B cell (primary cell): ENCODE measurements at regions of chr19 and their contacts with region 1.

Region 1: DNA sequence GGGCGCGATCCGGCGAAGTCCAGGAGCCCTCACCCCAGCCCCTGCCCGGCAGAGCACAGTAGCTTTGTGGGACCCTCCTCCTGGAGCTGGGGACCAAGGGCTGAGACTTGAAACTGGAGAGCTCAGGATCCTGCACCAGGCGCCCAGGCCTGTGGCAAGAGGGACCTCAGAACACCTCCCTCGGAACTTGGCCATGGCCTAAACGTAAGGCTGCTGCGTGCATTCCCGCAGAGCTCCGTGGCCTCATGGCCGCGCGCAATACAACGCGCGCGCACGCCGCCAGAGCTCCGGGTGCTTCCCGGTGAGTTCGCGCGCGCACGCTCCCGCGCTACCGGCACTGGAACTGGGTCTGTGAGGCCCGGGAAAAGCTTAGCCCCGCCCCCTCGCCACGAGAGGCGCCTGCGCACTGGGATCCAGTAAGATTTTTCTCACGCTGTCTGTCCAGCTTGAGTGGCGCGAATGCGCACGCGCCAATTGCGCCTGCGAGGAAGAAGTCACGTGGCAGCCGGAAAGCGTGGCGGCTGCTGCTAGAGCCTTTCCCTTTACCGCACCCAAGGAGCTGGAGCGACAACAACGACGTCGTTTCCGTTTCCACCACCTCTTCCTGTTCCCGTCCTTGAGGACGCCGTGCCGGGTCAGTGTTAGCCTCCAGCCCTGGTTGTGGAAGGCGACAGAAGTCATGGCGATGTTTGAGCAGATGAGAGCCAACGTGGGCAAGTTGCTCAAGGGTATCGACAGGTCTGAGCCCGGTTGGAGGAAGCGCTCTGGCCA is at the start of gene EIF3K:
- DNase-seq: peak; percentile 99
- ATAC-seq: peak; percentile 40
- H3K4me3 ChIP-seq: peak within 1 kb of the TSS; percentile 54 to 95 (median 79)
- H3K4me3 Mint-ChIP-seq: peak within 1 kb of the TSS; percentile 100
- H3K27ac ChIP-seq: peak within 1 kb of the TSS; percentile 88 to 93
- H3K27ac Mint-ChIP-seq: peak within 1 kb of the TSS; percentile 98
- H3K4me1 ChIP-seq: peaks cover 33 to 50% of the 10 kb centered on the region in 2 donors
- H3K4me1 Mint-ChIP-seq: peaks cover 47% of the 10 kb centered on the region
- H3K27me3 ChIP-seq: no peaks in the 10 kb centered on the region
- H3K27me3 Mint-ChIP-seq: no peaks in the 10 kb centered on the region
- CTCF ChIP-seq: no peak
- total RNA-seq, gene EIF3K: 284 and 295 TPM in 2 replicates

Region 2: GRCh38 chr19:38335949-38336637 is 282.7 kb before region 1 on chr19:
- CTCF ChIA-PET with region 1: interaction called, 3 read pairs
- POLR2A ChIA-PET with region 1: no interaction called
- intact Hi-C with region 1: loop called (anchors 1 kb)
- DNase-seq: peak; percentile 96
- ATAC-seq: peak; percentile 64
- H3K4me3 ChIP-seq: peak overlapping the region; percentile 52 to 85 (median 80)
- H3K4me3 Mint-ChIP-seq: peak overlapping the region; percentile 97
- H3K27ac ChIP-seq: peak overlapping the region; percentile 89 to 95
- H3K27ac Mint-ChIP-seq: peak overlapping the region; percentile 97
- H3K4me1 ChIP-seq: peaks cover 5 to 11% of the 10 kb centered on the region in 2 donors
- H3K4me1 Mint-ChIP-seq: peaks cover 13% of the 10 kb centered on the region
- H3K27me3 ChIP-seq: no peaks in the 10 kb centered on the region
- H3K27me3 Mint-ChIP-seq: no peaks in the 10 kb centered on the region
- CTCF ChIP-seq: no peak

Region 3: DNA sequence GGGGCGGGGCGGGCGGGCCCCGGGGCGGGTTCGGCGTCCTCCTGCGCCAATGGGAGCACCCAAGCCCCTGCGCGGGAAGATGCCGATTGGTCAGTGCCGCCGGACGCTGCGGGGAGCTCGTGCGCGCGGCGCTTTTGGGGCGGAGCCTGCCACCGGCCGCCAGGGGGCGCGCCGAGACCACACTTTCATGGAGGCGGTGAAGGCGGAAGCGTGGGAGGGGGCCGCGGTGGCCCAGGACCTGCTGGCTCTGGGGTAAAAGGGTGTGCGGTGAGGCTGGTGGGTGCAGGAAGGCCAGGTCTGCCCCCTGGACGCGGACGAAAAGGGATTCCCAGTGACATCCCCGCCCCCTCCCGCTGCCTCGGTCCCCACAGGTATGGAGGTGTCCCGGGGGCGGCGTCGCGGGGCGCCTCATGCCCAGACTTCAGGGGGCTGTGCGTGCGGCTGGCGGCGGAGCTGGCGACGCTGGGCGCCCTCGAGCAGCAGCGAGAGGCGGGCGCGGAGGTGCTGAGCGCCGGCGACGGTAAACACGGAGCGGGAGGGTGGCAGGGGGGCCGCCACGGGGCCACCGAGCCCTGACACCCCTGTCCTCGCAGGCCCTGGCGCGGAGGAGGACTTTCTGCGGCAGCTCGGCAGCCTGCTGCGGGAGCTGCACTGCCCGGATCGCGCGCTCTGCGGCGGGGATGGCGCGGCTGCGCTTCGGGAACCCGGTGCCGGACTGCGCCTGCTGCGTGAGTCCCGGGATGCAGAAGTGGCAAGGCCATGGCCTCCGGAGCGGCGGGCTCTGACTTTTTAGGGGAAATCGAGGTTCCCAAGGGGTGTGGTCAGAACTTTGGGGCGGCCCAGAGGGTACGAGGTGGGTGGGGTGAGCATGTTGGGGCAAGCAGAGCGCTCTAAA is 215.6 kb before region 1 on chr19 and contains the start of gene FAM98C:
- CTCF ChIA-PET with region 1: interaction called, 21 read pairs
- POLR2A ChIA-PET with region 1: interaction called, 5 read pairs
- intact Hi-C with region 1: loop called (anchors 1 kb)
- DNase-seq: peak; percentile 99
- ATAC-seq: peak; percentile 97
- H3K4me3 ChIP-seq: peak within 1 kb of the TSS; percentile 41 to 85 (median 75)
- H3K4me3 Mint-ChIP-seq: peak within 1 kb of the TSS; percentile 94
- H3K27ac ChIP-seq: peak within 1 kb of the TSS; percentile 61 to 79
- H3K27ac Mint-ChIP-seq: peak within 1 kb of the TSS; percentile 94
- H3K4me1 ChIP-seq: peaks cover 5 to 14% of the 10 kb centered on the region in 2 donors
- H3K4me1 Mint-ChIP-seq: peaks cover 18% of the 10 kb centered on the region
- H3K27me3 ChIP-seq: peaks cover 0 to 20% (median 7%) of the 10 kb centered on the region in 4 experiments
- H3K27me3 Mint-ChIP-seq: peaks cover 18% of the 10 kb centered on the region
- CTCF ChIP-seq: peak; percentile 99
- total RNA-seq, gene FAM98C: 44.1 and 45.3 TPM in 2 replicates

Region 4: DNA sequence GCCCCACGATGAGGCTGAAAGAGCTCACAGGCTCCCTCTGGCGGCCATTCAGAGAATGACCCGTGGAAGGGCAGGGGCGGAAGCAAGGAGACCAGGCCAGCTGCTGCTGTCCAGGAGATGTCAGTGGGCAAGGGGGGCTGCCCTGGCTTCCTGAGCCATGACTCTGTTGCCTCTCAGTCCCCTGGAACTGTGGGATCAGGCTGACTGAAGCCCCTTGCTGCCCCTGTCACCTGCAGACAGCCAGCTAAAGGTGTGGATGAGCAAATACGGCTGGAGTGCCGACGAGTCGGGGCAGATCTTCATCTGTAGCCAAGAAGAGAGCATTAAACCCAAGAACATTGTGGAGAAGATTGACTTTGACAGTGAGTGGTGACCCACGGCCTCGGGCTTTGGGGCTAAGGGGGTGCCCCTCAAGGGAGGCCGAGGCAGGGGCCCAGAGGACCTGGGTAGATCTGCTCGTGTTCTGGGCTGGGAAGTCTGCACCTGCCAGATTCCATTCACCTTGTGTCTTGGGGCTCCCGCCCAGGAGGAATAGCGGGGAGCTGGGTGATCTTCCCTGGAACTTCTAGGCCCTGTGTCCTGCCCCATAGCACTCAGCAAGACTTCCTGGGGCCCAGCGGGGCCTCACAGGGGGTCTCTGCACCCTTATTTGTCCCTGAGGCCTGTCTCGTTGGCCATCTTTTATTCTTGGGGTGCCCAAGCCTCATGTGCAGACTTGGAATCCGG is 16.1 kb after region 1 on chr19:
- CTCF ChIA-PET with region 1: interaction called, 65 read pairs
- POLR2A ChIA-PET with region 1: interaction called, 6 read pairs
- intact Hi-C with region 1: loop called (anchors 1 kb)
- DNase-seq: peak; percentile 80
- ATAC-seq: peak; percentile 50
- H3K4me3 ChIP-seq: no peak overlapping the region
- H3K4me3 Mint-ChIP-seq: no peak overlapping the region
- H3K27ac ChIP-seq: peak overlapping the region in 1 of 2 donors; percentile 30
- H3K27ac Mint-ChIP-seq: peak overlapping the region; percentile 83
- H3K4me1 ChIP-seq: peaks cover 18 to 23% of the 10 kb centered on the region in 2 donors
- H3K4me1 Mint-ChIP-seq: peaks cover 21% of the 10 kb centered on the region
- H3K27me3 ChIP-seq: no peaks in the 10 kb centered on the region
- H3K27me3 Mint-ChIP-seq: no peaks in the 10 kb centered on the region
- CTCF ChIP-seq: peak; percentile 97

Region 5: GRCh38 chr19:38792250-38793111 is 173.7 kb after region 1 on chr19:
- CTCF ChIA-PET with region 1: no interaction called
- POLR2A ChIA-PET with region 1: interaction called, 15 read pairs
- intact Hi-C with region 1: no loop called
- DNase-seq: peak; percentile 66
- ATAC-seq: peak; percentile 63
- H3K4me3 ChIP-seq: peak overlapping the region in 4 of 5 experiments; percentile 34 to 54 (median 48)
- H3K4me3 Mint-ChIP-seq: peak overlapping the region; percentile 81
- H3K27ac ChIP-seq: no peak overlapping the region
- H3K27ac Mint-ChIP-seq: peak overlapping the region; percentile 85
- H3K4me1 ChIP-seq: peaks cover 4 to 8% of the 10 kb centered on the region in 2 donors
- H3K4me1 Mint-ChIP-seq: peaks cover 4% of the 10 kb centered on the region
- H3K27me3 ChIP-seq: no peaks in the 10 kb centered on the region
- H3K27me3 Mint-ChIP-seq: no peaks in the 10 kb centered on the region
- CTCF ChIP-seq: peak; percentile 53

Region 6: DNA sequence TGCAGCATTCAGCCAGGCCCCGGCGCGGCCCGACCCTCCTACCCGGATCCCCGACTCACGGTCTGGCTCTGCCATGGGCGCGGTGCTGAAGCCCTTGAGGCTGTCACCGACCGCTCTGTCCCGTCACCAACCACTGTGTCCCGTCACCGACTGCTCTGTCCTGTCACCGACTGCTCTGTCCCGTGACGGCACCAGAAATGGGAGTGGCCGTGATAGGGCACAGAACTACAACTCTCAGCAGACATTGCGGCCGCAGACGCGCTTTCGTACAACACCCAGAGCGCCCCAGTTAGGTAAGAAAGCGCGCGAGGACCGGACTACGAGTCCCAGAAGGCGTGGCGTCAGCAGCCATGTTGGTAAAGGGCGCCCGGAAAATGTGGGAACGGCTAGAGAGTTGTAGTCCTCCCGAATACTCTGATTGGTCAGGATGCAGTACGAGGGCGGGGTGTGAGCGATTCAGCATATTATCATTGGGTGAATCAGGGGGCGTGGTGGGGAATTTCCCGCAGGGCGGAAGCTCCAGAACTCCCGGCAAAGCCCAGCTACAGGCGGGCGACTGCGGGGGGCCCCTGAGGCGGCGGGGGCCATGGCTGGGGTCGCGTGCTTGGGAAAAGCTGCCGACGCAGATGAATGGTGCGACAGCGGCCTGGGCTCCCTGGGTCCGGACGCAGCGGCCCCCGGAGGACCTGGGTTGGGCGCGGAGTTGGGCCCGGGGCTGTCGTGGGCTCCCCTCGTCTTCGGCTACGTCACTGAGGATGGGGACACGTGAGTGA is 280.9 kb after region 1 on chr19 and contains the starts of genes NFKBIB and SIRT2:
- CTCF ChIA-PET with region 1: no interaction called
- POLR2A ChIA-PET with region 1: interaction called, 7 read pairs
- intact Hi-C with region 1: loop called (anchors 1 kb)
- DNase-seq: peak; percentile 100
- ATAC-seq: peak; percentile 89
- H3K4me3 ChIP-seq: peak within 1 kb of the TSS; percentile 85 to 95 (median 92)
- H3K4me3 Mint-ChIP-seq: peak within 1 kb of the TSS; percentile 96
- H3K27ac ChIP-seq: peak within 1 kb of the TSS; percentile 89 to 99
- H3K27ac Mint-ChIP-seq: peak within 1 kb of the TSS; percentile 94
- H3K4me1 ChIP-seq: peaks cover 20 to 30% of the 10 kb centered on the region in 2 donors
- H3K4me1 Mint-ChIP-seq: peaks cover 38% of the 10 kb centered on the region
- H3K27me3 ChIP-seq: no peaks in the 10 kb centered on the region
- H3K27me3 Mint-ChIP-seq: no peaks in the 10 kb centered on the region
- CTCF ChIP-seq: no peak
- total RNA-seq, gene NFKBIB: 30.3 and 31.5 TPM in 2 replicates
- total RNA-seq, gene SIRT2: 41.8 and 42.4 TPM in 2 replicates